Activated T-helper 2 cell treated with anti-CD3 and anti-CD28 coated beads, Interferon-gamma antibody, Interleukin-2, Interleukin-4, amounts not matched to agents 10 μg/mL and 5 μg/mL and 100 μg/mL, durations not matched to agents 14 hours and 24 hours and 36 hours (primary cell): ENCODE measurements at regions of chr1 and their contacts with region 1.

Region 1: DNA sequence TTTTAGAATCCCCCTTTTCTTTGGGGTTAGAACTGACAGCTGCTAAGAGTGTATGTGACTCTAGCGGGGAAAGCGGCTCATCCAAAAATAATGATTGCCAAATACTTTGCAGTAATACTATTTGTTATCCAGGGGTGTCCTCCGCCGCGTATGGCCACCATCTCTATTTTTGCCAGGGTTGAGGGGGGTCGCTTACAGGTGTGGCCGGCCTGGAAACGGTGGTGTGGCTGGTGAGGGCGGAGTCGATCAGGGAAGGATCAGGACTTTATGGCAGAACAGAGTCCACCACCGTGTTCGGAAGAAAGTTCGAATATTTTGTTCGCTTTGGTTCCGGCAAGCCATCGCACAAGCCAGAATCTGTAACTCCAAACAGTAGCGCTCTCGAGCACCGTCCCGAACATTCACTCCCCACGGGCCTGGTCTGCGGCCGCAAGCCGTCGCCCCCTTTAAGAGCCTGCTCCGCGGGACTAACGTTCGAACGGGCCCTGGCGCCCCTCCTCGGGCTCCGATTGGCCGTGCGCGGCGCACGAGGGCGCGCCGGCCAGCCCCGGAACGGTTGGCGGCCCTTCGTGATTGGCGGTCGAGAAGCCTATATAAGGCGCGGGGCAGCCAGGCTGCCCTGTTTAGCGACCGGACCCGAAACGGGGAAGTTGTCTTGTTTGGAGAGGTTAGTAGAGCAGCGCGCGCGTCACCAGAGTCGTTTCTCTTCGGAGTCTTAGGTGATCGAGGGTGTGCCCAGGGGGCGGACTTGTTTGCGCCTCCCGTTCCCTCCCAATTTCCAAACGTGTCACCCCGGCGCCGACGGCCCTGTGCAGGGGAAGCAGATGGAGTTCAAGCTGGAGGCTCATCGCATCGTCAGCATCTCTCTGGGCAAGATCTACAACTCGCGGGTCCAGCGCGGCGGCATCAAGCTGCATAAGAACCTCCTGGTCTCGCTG is at the start of gene IER5:
- DNase-seq: peak; percentile 95
- H3K4me3 Mint-ChIP-seq: peak within 1 kb of the TSS; percentile 98
- H3K27ac Mint-ChIP-seq: peak within 1 kb of the TSS; percentile 99
- H3K4me1 Mint-ChIP-seq: peaks cover 47% of the 10 kb centered on the region
- H3K27me3 Mint-ChIP-seq: no peaks in the 10 kb centered on the region
- total RNA-seq, gene IER5: 44.3 and 44.6 TPM in 2 replicates

Region 2: GRCh38 chr1:181010789-181011188 is 77.6 kb before region 1 on chr1:
- intact Hi-C with region 1: no loop called
- DNase-seq: no peak
- H3K4me3 Mint-ChIP-seq: no peak overlapping the region
- H3K27ac Mint-ChIP-seq: no peak overlapping the region
- H3K4me1 Mint-ChIP-seq: peaks cover 32% of the 10 kb centered on the region
- H3K27me3 Mint-ChIP-seq: no peaks in the 10 kb centered on the region

Region 3: GRCh38 chr1:181021811-181022434 is 66.4 kb before region 1 on chr1:
- intact Hi-C with region 1: loop called (anchors 1 kb)
- DNase-seq: peak; percentile 41
- H3K4me3 Mint-ChIP-seq: peak overlapping the region; percentile 87
- H3K27ac Mint-ChIP-seq: peak overlapping the region; percentile 95
- H3K4me1 Mint-ChIP-seq: peaks cover 37% of the 10 kb centered on the region
- H3K27me3 Mint-ChIP-seq: peaks cover 17% of the 10 kb centered on the region

Region 4: DNA sequence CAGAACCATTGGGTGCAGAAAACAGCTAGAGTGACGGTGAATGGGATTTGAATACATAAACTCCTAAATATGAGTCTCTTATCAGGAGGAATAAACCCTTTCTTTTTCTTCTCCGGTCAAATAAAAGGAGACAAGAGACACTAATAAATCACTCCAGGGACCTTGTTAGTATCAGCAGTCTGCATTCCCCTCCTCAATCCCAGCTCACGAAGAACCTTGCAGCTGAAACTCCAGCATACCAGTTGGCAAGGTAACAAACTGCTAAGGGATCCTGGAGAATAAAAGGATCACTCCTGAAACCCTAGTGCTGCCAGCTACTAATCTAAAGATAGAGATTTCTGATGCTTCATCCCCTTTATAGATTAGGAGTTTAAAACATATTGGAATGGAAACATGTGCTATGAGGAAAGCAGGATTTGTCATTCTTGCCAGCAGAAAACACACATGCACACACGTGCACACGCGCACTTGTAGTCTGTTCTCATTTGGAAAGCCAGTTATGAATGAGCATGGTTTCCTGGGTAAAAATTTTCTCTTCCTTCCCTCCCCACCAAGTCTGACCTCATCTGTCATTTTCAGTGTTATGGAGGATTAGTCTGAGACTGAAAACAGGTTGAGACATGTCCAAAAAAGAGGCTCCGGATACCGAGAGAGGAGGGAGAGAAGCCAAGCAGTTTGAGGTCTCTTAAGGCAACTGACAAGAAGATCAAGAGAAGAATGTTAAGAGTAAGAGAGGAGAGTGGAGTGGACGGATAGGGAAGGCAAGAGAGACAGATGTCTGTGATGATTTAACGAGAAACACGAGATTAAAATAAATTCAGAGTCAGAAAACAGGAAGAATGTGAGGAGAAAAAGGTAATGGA is 11.0 kb after region 1 on chr1:
- intact Hi-C with region 1: loop called (anchors 1 kb)
- DNase-seq: peak; percentile 45
- H3K4me3 Mint-ChIP-seq: peak overlapping the region; percentile 74
- H3K27ac Mint-ChIP-seq: peak overlapping the region; percentile 98
- H3K4me1 Mint-ChIP-seq: peaks cover 85% of the 10 kb centered on the region
- H3K27me3 Mint-ChIP-seq: no peaks in the 10 kb centered on the region

Region 5: DNA sequence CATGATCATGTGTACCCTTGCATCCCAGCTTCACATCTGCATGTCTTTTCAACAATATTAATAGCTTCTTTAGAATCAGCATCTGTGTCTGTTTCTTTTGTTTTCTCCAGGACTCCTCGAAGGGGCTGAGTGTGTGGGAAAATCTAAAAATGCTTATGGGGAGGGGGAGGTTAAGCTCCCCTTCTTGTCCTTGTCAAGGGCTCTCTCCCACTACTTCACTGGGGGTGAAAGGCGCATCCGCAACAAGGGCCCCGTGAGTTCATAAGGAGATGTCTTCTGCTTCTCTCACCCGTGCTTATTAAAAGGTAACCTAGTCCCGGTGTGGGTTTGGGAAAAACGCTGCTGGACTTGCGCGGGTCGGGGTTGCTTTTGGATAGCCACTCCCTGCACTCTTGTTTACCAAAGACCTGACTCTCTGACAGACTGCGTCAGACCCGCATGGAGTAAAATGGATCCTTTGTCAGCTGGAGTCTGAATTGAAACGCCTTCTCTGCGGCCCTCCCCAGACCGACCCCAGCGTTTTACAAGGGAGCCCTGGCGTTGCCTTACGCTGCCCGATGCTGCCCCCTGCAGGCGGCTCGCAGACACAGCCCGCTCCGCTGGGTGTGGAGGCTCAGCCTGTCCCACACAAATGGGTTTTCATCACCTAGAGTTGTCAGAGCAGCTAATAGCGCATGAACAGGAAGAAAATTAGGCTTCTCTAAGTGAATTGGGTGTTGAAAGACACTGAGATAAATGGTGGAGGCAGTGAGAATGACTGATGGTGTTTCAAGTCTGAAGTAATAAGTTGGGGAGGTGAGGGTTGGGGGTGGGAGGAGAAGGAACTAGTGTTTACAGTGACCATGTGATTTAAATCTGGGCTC is 54.0 kb after region 1 on chr1:
- intact Hi-C with region 1: loop called (anchors 1 kb)
- DNase-seq: peak; percentile 81
- H3K4me3 Mint-ChIP-seq: peak overlapping the region; percentile 63
- H3K27ac Mint-ChIP-seq: peak overlapping the region; percentile 88
- H3K4me1 Mint-ChIP-seq: peaks cover 61% of the 10 kb centered on the region
- H3K27me3 Mint-ChIP-seq: peaks cover 4% of the 10 kb centered on the region

Region 6: DNA sequence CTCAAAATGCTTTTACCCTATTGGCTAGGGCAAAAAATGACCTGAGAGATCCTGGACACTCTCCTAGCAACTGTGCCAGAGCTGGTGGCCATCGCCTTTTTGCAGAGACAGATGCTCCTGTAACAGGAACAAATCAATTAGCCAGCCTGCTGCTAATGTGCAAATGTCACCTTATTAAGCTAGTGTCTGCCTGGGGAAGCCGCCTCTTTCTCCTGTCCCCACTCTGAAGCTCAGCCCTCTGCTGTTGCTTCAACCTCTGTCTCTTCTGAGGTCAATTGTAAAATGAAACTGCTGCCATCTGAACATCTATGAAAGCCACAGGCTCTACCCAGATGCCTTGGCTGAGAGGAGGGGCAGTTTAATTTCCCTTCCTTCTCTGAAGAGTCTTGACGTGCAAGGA is 309.5 kb after region 1 on chr1:
- intact Hi-C with region 1: loop called (anchors 2 kb)
- DNase-seq: peak; percentile 40
- H3K4me3 Mint-ChIP-seq: peak overlapping the region; percentile 55
- H3K27ac Mint-ChIP-seq: peak overlapping the region; percentile 80
- H3K4me1 Mint-ChIP-seq: peaks cover 35% of the 10 kb centered on the region
- H3K27me3 Mint-ChIP-seq: no peaks in the 10 kb centered on the region